ENCODE measurements at regions of chr1 and their contacts with region 1.

Region 1: DNA sequence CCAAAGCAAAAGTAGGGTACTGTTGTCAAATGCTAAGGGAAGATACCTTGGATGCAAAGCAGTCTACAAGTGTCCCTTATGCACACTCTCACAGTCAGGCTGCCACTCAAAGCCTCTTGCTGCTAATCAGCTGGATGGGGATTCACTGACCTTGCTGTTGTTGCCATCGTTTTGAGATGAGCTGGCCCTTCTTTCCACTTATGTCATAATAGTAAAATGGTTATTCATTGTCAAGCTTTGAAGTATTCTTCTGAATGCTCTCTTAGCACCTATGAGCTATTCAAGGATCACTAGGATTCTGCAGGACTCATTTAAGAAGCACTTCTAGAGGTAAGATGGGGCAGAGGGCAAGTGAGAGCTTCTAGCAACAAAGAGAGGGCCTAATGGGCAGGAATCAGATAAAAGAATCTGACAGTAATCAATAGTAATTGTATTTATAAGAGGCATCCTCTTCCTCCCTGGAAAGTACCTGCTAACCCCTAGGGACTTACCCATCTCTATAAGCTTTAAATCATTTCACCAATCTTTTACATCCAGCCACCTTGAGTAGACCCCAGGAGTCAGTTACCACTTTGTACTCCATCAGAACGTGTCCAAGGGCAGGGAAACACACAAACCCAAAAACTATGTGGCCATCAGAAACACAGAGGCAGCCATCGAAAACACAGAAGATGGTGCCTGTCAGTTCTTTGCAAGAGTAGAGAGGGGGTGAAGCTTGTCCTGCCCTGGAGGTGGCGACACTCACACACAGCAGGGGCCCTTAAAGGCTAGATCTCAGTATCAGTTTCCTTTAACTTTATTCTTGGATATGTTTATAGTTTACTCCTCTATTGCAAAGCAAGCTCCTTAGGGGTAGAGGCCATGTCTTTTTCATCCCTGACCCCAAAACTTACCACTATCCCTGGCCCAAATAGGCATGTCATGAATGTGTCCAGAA is 103.7 kb upstream of the NFIA start:
- DNase-seq: peak; percentile 69
- H3K4me3 ChIP-seq: no peak overlapping the region
- H3K27ac ChIP-seq: no peak overlapping the region
- H3K4me1 ChIP-seq: peaks cover 6% of the 10 kb centered on the region
- H3K27me3 ChIP-seq: no peaks in the 10 kb centered on the region
- CTCF ChIP-seq: peak; percentile 60 to 77
- POLR2A ChIP-seq: no peak

Region 2: DNA sequence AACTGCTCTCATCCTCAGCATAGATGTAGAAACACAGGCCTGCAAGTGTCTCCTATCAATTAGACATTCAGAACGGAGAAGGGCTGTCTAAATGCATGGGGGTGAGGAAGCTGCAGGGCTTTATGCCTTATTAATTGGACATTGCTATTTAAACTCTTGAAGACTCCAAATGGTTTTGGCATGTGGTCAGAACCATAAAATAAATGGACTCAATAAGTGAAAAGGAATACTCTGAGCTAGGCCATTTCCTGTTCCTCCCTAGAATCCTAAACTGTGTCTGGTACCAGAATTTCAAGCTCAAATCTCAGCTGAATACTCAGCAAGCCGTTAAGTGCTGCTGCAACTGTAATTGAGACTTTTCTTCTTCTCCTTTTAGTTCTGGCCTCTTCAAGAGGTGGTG is 824.7 kb before region 1 on chr1:
- CTCF ChIA-PET with region 1: interaction called, 13 read pairs
- POLR2A ChIA-PET with region 1: no interaction called
- dilution Hi-C with region 1: no loop called
- intact Hi-C with region 1: no loop called
- DNase-seq: no peak
- H3K4me3 ChIP-seq: no peak overlapping the region
- H3K27ac ChIP-seq: no peak overlapping the region
- H3K4me1 ChIP-seq: no peaks in the 10 kb centered on the region
- H3K27me3 ChIP-seq: no peaks in the 10 kb centered on the region
- CTCF ChIP-seq: no peak
- POLR2A ChIP-seq: no peak

Region 3: DNA sequence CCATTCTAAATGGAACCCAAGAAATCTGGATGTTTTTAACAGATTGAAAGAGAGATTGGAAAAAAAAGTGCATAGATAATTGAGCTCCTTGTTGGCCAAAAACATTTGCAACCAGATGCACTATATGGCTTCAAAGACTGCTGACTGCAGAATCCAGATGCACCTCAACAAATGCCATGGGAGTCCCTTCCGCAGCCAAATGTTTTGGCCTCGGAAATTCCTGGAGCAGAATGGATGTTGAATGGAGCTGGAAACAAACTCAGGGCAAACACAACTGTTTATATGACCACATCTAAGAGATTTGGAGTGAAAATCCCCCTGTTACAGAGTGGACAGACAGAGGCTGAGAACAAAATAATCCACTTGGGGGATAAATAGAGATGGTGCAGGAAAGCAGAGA is 181.3 kb before region 1 on chr1:
- CTCF ChIA-PET with region 1: no interaction called
- POLR2A ChIA-PET with region 1: no interaction called
- dilution Hi-C with region 1: no loop called
- intact Hi-C with region 1: no loop called
- DNase-seq: no peak
- H3K4me3 ChIP-seq: no peak overlapping the region
- H3K27ac ChIP-seq: no peak overlapping the region
- H3K4me1 ChIP-seq: no peaks in the 10 kb centered on the region
- H3K27me3 ChIP-seq: peaks cover 0 to 7% of the 10 kb centered on the region in 2 experiments
- CTCF ChIP-seq: no peak
- POLR2A ChIP-seq: no peak

Region 4: GRCh38 chr1:60989749-60990713 is 11.3 kb after region 1 on chr1:
- CTCF ChIA-PET with region 1: interaction called, 24 read pairs
- POLR2A ChIA-PET with region 1: no interaction called
- dilution Hi-C with region 1: no loop called
- intact Hi-C with region 1: no loop called
- DNase-seq: peak; percentile 97
- H3K4me3 ChIP-seq: no peak overlapping the region
- H3K27ac ChIP-seq: peak overlapping the region; percentile 51
- H3K4me1 ChIP-seq: peaks cover 21% of the 10 kb centered on the region
- H3K27me3 ChIP-seq: no peaks in the 10 kb centered on the region
- CTCF ChIP-seq: no peak
- POLR2A ChIP-seq: no peak

Region 5: DNA sequence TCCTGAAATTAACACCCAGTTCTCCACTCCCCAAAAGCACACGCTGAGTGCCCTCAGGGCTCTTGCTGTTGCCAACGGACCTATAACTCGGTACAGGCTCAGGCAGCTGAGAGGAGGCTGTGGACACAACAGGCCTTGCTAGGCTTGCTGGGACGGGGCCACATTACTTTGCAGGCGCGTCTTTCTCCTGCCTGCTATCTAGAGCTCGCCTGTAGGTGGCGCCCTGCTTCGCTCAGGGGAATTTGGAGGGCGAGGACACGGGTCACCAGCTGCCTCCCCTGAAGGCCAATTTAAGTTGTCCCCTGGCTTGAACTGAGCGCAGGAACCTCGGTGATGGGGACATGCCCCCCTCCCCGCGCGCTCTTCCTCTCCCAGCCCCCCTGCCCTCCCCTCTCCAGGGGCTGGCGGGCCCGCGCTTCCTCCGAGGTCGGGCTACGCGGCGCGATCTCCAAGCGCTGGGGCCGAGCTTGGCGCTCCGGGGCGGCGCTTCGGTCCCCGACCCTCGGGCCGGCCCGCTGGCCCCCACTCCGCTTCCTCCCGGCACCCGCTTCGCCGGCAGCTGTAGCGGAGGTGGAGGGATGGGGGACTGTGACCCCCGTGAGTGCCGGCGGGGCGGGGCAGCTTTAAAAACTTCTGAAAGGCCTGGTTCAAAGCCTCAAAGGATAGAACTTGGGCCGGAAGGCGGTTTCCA is 71.3 kb after region 1 on chr1:
- CTCF ChIA-PET with region 1: interaction called, 27 read pairs
- POLR2A ChIA-PET with region 1: no interaction called
- dilution Hi-C with region 1: no loop called
- intact Hi-C with region 1: no loop called
- DNase-seq: peak; percentile 93
- H3K4me3 ChIP-seq: peak overlapping the region; percentile 62 to 95 (median 92)
- H3K27ac ChIP-seq: peak overlapping the region; percentile 84
- H3K4me1 ChIP-seq: peaks cover 16% of the 10 kb centered on the region
- H3K27me3 ChIP-seq: no peaks in the 10 kb centered on the region
- CTCF ChIP-seq: peak; percentile 89 to 96
- POLR2A ChIP-seq: peak; percentile 40